Activated CD4-positive, alpha-beta T cell treated with anti-CD3 and anti-CD28 coated beads for 36 hours (primary cell): ENCODE measurements at regions of chr6 and their contacts with region 1.

Region 1: DNA sequence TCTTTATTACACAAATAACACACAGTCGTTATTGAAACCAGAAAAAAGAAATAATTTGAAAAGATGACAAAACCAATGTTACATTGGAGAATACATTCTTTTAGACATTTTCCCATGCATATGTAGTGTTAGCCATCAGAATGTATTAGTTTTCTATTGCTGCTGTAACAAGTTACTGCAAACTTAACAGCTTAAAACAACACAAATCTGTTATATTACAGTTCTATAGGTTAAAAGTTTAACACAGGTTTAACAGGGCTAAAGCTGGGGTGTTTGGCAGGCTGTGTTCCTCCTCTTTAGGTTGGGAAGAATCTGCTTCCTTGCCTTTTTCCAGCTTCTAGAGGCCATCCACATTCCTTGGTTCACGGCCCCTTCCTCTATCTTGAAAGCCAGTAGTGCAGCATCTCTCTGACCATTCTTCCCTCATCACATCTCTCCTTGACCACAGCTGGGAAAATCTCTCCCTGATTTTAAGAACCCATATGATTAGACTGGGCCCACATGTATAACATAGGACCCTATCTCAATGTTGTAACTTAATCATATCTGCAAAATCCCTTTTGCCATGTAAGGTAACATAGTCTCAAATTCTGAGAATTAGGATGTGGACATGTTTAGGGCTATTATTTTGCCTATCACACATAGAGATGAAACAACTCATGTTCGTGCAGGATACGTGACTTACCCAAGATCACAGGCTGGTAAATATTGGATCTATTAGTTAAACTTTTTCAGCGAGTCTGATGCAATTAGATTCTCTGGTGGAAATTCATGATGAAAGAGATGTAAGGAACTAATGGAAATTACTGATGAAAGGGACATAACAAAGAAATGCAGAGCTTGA is 145.4 kb upstream of the TMEM170B start:
- DNase-seq: no peak
- ATAC-seq: no peak
- H3K4me3 Mint-ChIP-seq: no peak overlapping the region
- H3K27ac Mint-ChIP-seq: no peak overlapping the region
- H3K4me1 Mint-ChIP-seq: peaks cover under 1% of the 10 kb centered on the region
- H3K27me3 Mint-ChIP-seq: peaks cover 3% of the 10 kb centered on the region

Region 2: DNA sequence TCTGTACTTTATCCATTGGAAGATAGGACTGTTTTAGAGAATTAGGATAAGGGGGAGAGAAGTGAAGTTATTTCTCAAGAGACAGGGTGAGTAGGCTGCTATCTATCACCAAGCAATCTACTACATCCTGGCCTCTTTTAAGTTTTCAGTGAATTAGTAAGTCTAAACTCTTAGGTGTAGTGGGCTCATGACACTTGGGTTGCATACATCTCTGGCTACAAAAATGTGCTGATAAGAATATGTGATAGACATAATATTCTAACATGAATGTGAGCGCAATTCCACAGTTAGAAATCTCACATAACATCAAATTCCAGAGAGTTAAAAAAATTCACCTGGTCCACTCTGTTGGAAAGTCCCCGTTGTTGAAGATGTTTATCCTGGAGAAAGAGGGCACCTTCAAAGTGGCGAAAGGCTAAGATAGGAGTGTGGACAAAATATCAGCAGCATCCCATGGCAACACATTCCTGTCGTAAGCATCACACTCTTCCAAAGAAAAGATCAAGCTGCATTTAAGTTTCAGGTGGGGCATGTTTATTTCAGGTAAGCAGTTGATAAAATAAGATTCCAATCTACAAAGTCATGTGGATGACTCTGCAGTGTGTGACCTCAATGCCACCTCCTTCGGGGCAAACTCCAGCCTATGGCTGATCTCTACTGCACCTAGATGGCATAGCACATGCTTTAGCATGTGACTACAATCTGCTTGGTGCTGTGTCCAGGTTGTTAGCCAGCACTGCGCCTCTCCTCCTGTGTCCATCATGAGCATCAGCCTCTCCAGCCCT is 48.0 kb before region 1 on chr6:
- CTCF ChIA-PET with region 1: no interaction called
- POLR2A ChIA-PET with region 1: no interaction called
- intact Hi-C with region 1: loop called in 1 of 2 experiments (anchors 1 kb)
- DNase-seq: no peak
- ATAC-seq: no peak
- H3K4me3 Mint-ChIP-seq: no peak overlapping the region
- H3K27ac Mint-ChIP-seq: peak overlapping the region; percentile 86
- H3K4me1 Mint-ChIP-seq: peaks cover 78% of the 10 kb centered on the region
- H3K27me3 Mint-ChIP-seq: no peaks in the 10 kb centered on the region

Region 3: GRCh38 chr6:11416768-11417576 is 24.8 kb after region 1 on chr6:
- CTCF ChIA-PET with region 1: no interaction called
- POLR2A ChIA-PET with region 1: no interaction called
- intact Hi-C with region 1: no loop called
- DNase-seq: peak; percentile 42
- ATAC-seq: no peak
- H3K4me3 Mint-ChIP-seq: no peak overlapping the region
- H3K27ac Mint-ChIP-seq: no peak overlapping the region
- H3K4me1 Mint-ChIP-seq: peaks cover 43% of the 10 kb centered on the region
- H3K27me3 Mint-ChIP-seq: no peaks in the 10 kb centered on the region

Region 4: DNA sequence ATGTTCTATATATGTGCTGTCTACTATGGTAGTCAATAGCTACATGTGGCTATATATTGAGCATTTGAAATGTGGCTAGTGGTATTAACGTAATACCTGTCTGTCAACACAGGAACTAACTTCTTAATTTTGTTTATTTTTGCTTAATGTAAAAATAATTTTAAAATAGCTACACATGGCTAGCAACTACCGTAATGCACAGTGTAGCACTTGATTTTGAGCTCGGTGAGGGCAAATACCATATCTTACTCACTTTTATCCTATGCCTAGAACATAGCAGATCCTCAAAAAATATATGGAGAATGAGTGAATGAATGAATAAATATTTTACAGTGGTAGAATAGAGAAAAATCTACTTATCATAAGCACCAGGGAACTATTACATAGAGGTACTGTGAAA is 117.3 kb after region 1 on chr6:
- CTCF ChIA-PET with region 1: no interaction called
- POLR2A ChIA-PET with region 1: no interaction called
- intact Hi-C with region 1: no loop called
- DNase-seq: no peak
- ATAC-seq: no peak
- H3K4me3 Mint-ChIP-seq: no peak overlapping the region
- H3K27ac Mint-ChIP-seq: no peak overlapping the region
- H3K4me1 Mint-ChIP-seq: no peaks in the 10 kb centered on the region
- H3K27me3 Mint-ChIP-seq: peaks cover 6% of the 10 kb centered on the region